BJ (cell line): ENCODE measurements at regions of chr15 and their contacts with region 1.

Region 1: GRCh38 chr15:74545880-74546656 is 5.0 kb downstream of the ARID3B start:
- DNase-seq: peak; percentile 97
- H3K4me3 ChIP-seq: no peak overlapping the region
- H3K27me3 ChIP-seq: 0 out of 2 replicates have a peak, but pooled peaks cover 2% of the 10 kb centered on the region
- CTCF ChIP-seq: no peak

Region 2: GRCh38 chr15:74193305-74193718 is 352.8 kb before region 1 on chr15:
- CTCF ChIA-PET with region 1: no interaction called
- POLR2A ChIA-PET with region 1: no interaction called
- DNase-seq: peak; percentile 68
- H3K4me3 ChIP-seq: no peak overlapping the region
- H3K27me3 ChIP-seq: no peaks in the 10 kb centered on the region
- CTCF ChIP-seq: no peak

Region 3: DNA sequence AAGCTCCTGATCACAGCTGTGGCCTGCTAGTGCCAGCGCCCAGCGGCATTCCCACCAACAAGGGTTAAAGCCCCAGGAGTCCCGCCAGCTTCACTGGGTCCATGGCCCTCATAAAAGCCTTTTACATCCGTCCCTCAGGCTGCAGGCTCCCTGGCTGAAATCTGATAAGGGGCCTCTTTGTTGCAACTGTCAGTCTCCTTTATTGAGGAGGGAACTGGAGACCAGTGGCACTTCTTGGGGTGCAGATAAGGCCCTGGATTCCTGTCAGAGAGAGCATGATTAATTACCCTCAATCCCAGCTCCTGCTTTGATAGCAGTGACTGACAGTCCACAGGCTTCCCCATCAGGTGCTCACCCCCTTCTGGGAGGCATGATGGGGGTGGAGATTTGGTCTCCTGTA is 38.7 kb after region 1 on chr15:
- CTCF ChIA-PET with region 1: interaction called, 3 read pairs
- POLR2A ChIA-PET with region 1: interaction called, 25 read pairs
- DNase-seq: no peak
- H3K4me3 ChIP-seq: no peak overlapping the region
- H3K27me3 ChIP-seq: no peaks in the 10 kb centered on the region
- CTCF ChIP-seq: no peak

Region 4: DNA sequence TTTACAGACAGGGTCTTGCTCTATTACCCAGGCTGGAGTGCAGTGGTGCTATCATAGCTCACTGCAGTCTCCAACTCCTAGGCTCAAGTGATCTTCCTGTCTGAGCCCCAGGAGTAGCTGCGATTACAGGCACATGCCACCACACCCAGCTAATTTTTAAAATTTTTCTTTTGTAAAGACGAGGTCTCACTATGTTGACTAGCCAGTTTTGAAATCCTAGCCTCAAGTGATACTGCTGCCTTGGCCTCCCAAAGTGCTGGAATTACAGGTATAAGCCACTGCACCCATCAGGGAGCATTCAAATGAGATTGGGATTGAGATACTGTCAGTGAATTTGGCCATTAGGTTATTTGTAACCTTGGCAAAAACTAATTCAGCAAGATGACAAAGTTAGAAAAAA is 128.1 kb after region 1 on chr15:
- CTCF ChIA-PET with region 1: no interaction called
- POLR2A ChIA-PET with region 1: no interaction called
- DNase-seq: no peak
- H3K4me3 ChIP-seq: no peak overlapping the region
- H3K27me3 ChIP-seq: no peaks in the 10 kb centered on the region
- CTCF ChIP-seq: no peak